Breast epithelium (tissue), 4 donors: ENCODE measurements at regions of chr10 and their contacts with region 1.

Region 1: GRCh38 chr10:25867320-25867719 is 66.7 kb upstream of the MYO3A start:
- DNase-seq: no peak
- H3K4me3 ChIP-seq: no peak overlapping the region
- H3K27ac ChIP-seq: no peak overlapping the region
- H3K4me1 ChIP-seq: no peaks in the 10 kb centered on the region
- H3K27me3 ChIP-seq: no peaks in the 10 kb centered on the region
- CTCF ChIP-seq: no peak
- POLR2A ChIP-seq: no peak

Region 2: GRCh38 chr10:25888627-25889026 is 21.3 kb after region 1 on chr10:
- intact Hi-C with region 1: loop called (anchors 1 kb)
- DNase-seq: no peak
- H3K4me3 ChIP-seq: no peak overlapping the region
- H3K27ac ChIP-seq: no peak overlapping the region
- H3K4me1 ChIP-seq: no peaks in the 10 kb centered on the region
- H3K27me3 ChIP-seq: no peaks in the 10 kb centered on the region
- CTCF ChIP-seq: no peak
- POLR2A ChIP-seq: no peak